Heart right ventricle (tissue), 16 donors: ENCODE measurements at regions of chr17 and their contacts with region 1.

Region 1: DNA sequence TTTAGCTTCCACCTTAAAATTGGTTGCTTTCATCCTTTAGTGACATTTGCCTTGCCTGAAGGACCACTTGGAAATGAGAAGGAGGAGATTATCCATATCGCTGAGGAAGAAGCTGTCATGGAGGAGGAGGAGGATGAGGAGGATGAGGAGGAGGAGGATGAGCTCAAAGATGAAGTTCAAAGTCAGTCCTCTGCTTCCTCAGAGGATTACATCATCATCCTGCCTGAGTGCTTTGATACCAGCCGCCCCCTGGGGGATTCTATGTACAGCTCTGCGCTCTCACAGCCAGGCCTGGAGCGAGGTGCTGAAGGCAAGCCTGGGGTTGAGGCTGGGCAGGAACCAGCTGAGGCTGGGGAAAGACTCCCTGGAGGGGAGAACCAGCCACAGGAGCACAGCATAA is 11.5 kb upstream of the TMEM106A start:
- DNase-seq: no peak
- ATAC-seq: no peak
- H3K4me3 ChIP-seq: no peak overlapping the region
- H3K27ac ChIP-seq: no peak overlapping the region
- H3K4me1 ChIP-seq: no peaks in the 10 kb centered on the region
- H3K27me3 ChIP-seq: no peaks in the 10 kb centered on the region
- CTCF ChIP-seq: no peak

Region 2: DNA sequence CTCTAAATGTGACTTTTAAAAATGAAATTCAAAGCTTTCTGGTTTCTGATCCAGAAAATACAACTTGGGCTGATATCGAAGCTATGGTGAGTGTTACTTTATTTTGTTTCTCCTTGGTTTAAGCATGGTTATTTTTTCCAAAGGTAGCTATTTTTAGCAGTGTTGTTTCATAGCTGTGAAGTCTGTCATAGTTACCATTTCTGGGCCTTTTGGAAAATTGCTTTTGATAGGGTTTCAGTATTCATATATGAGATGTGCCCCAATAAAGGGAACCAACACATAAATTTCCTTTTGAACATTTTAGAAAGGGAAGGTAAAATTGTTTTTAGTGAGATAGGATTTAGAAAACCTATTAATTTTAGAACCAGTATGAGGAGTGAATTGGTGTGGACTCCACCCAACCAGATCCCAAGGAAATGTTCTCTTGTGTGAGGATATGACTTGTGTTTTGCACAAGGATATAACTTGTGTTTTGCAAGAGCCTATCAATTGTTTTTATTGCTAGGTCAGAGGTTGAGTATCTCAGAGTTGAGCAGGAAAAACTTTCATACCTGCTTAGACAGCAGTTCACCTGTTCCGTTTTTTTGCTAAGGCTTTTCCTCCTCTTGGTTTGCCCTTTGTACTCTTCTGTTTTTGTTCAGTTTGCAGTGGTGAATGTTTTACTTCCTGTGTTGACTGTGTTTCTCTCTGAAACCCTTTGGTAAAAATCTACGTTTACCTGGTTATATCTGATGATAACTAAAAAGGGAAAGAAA is 24.1 kb before region 1 on chr17:
- intact Hi-C with region 1: loop called in 1 of 10 experiments (anchors 2 kb)
- DNase-seq: no peak
- ATAC-seq: no peak
- H3K4me3 ChIP-seq: peak overlapping the region in 2 of 10 donors; percentile 2 to 3
- H3K27ac ChIP-seq: peak overlapping the region in 8 of 10 donors; percentile 17 to 58 (median 44)
- H3K4me1 ChIP-seq: peaks cover 5 to 70% (median 52%) of the 10 kb centered on the region in 9 donors
- H3K27me3 ChIP-seq: no peaks in the 10 kb centered on the region
- CTCF ChIP-seq: no peak